ENCODE measurements at regions of chr5 and their contacts with region 1.

Region 1: DNA sequence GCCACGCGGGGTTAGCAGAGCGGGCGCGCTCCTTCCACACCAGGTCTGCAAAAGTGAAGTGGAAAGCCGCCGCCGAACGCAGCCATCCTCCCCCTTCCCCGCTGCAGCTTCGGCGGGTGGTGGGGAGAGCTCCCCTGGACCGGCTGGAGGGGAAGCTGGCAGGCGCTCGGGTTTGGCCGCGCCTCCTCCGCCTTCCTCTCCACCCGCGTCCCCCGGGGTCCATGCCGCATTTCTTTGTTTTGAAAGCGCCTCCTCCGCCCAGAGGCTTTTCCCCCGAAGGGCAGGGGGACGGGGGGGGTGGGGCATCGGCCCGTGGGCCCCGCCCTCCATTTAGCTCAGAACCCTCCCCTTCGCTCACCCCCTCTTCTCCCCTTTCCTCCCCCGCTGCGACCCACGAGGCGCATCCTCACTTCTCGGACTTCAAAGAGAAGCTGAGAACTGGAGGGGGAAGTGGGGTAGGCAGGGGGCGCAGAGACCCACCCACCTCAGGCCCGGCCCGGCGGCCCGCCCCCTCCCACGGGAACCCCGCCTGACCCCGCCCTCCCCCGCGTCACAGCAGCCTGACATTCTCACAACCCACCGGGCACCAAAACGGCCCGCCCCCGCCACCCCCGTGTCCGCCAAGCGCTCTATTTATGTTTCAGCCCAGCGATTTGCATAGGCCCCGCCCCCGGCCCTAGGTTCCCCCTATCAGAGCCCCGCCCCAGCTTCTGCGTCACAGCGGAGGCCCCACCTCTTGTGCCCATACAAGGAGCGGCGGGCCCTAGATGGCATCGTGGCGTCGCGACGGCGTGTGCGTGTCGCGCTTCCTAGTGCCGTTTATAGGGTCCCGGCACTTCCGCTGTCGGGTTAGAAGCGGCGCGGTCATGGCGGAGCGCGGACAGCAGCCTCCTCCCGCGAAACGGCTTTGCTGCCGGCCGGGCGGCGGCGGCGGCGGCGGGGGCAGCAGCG is at the start of gene ZSWIM6:
- DNase-seq: peak; percentile 100
- ATAC-seq: peak; percentile 82
- H3K4me3 ChIP-seq: peak within 1 kb of the TSS; percentile 91 to 94
- H3K27ac ChIP-seq: peak within 1 kb of the TSS; percentile 89 to 99 (median 96)
- H3K4me1 ChIP-seq: peaks cover 38% of the 10 kb centered on the region
- H3K27me3 ChIP-seq: no peaks in the 10 kb centered on the region
- CTCF ChIP-seq: peak in 2 of 7 experiments; percentile 2 to 18
- POLR2A ChIP-seq: peak; percentile 97 to 98 (median 98)
- total RNA-seq, gene ZSWIM6: 5.9 to 8.8 TPM

Region 2: GRCh38 chr5:61408476-61409168 is 76.9 kb after region 1 on chr5:
- intact Hi-C with region 1: loop called (anchors 10 kb)
- DNase-seq: peak; percentile 99 to 100 (median 100)
- ATAC-seq: peak; percentile 100
- H3K4me3 ChIP-seq: no peak overlapping the region
- H3K27ac ChIP-seq: peak overlapping the region in 3 of 4 donors; percentile 50 to 76 (median 70)
- H3K4me1 ChIP-seq: peaks cover 23% of the 10 kb centered on the region
- H3K27me3 ChIP-seq: no peaks in the 10 kb centered on the region
- CTCF ChIP-seq: peak in 1 of 7 experiments; percentile 2
- POLR2A ChIP-seq: no peak

Region 3: GRCh38 chr5:61658592-61659008 is 326.9 kb after region 1 on chr5:
- intact Hi-C with region 1: loop called (anchors 10 kb)
- DNase-seq: peak; percentile 83 to 90 (median 88)
- ATAC-seq: peak; percentile 87
- H3K4me3 ChIP-seq: no peak overlapping the region
- H3K27ac ChIP-seq: peak overlapping the region in 3 of 4 donors; percentile 58 to 65 (median 65)
- H3K4me1 ChIP-seq: peaks cover 15% of the 10 kb centered on the region
- H3K27me3 ChIP-seq: no peaks in the 10 kb centered on the region
- CTCF ChIP-seq: peak; percentile 88 to 94 (median 92)
- POLR2A ChIP-seq: no peak